Spleen (tissue), 13 donors: ENCODE measurements at regions of chr11 and their contacts with region 1.

Region 1: DNA sequence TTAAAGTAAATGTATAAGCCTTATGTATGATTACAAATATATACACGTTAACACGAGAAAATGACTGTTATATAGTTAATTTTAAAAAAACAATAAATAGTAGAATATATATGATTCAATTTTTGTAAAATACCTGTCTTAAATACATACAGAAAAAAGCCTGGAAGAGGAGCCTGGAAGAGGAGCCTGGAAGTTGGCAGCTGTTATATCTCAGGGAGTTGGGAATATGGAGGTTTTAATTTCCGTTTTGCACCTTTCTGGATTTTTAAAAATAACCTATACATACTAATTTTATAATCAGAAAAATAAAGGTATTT is 111.6 kb downstream of the WT1 start:
- DNase-seq: no peak
- H3K4me3 ChIP-seq: no peak overlapping the region
- H3K27ac ChIP-seq: no peak overlapping the region
- H3K4me1 ChIP-seq: peaks cover 0 to 3% (median 0%) of the 10 kb centered on the region in 6 donors
- H3K27me3 ChIP-seq: peaks cover 0 to 16% (median 0%) of the 10 kb centered on the region in 7 donors
- CTCF ChIP-seq: no peak
- POLR2A ChIP-seq: no peak

Region 2: GRCh38 chr11:31826536-31827438 is 497.0 kb before region 1 on chr11:
- intact Hi-C with region 1: no loop called
- DNase-seq: no peak
- H3K4me3 ChIP-seq: peak overlapping the region in 1 of 8 donors; percentile 42
- H3K27ac ChIP-seq: no peak overlapping the region
- H3K4me1 ChIP-seq: peaks cover 0 to 32% (median 16%) of the 10 kb centered on the region in 6 donors
- H3K27me3 ChIP-seq: peaks cover 14 to 100% (median 92%) of the 10 kb centered on the region in 7 donors
- CTCF ChIP-seq: no peak
- POLR2A ChIP-seq: no peak

Region 3: GRCh38 chr11:32478277-32478731 is 154.5 kb after region 1 on chr11:
- intact Hi-C with region 1: no loop called
- DNase-seq: no peak
- H3K4me3 ChIP-seq: no peak overlapping the region
- H3K27ac ChIP-seq: no peak overlapping the region
- H3K4me1 ChIP-seq: no peaks in the 10 kb centered on the region
- H3K27me3 ChIP-seq: no peaks in the 10 kb centered on the region
- CTCF ChIP-seq: no peak
- POLR2A ChIP-seq: no peak

Region 4: GRCh38 chr11:32792948-32793475 is 469.2 kb after region 1 on chr11:
- intact Hi-C with region 1: loop called (anchors 5 kb)
- DNase-seq: no peak
- H3K4me3 ChIP-seq: peak overlapping the region in 4 of 8 donors; percentile 2 to 43 (median 10)
- H3K27ac ChIP-seq: no peak overlapping the region
- H3K4me1 ChIP-seq: peaks cover 0 to 11% (median 7%) of the 10 kb centered on the region in 6 donors
- H3K27me3 ChIP-seq: no peaks in the 10 kb centered on the region
- CTCF ChIP-seq: peak; percentile 29 to 77 (median 55)
- POLR2A ChIP-seq: no peak